B cell (primary cell): ENCODE measurements at regions of chr18 and their contacts with region 1.

Region 1: GRCh38 chr18:3177902-3178687 is 41.7 kb downstream of the MYOM1 start:
- DNase-seq: peak; percentile 95
- ATAC-seq: peak; percentile 84
- H3K4me3 ChIP-seq: peak overlapping the region in 3 of 5 experiments; percentile 37 to 59 (median 44)
- H3K4me3 Mint-ChIP-seq: peak overlapping the region; percentile 77
- H3K27ac ChIP-seq: peak overlapping the region; percentile 53 to 78
- H3K27ac Mint-ChIP-seq: peak overlapping the region; percentile 97
- H3K4me1 ChIP-seq: peaks cover 20 to 27% of the 10 kb centered on the region in 2 donors
- H3K4me1 Mint-ChIP-seq: peaks cover 28% of the 10 kb centered on the region
- H3K27me3 ChIP-seq: no peaks in the 10 kb centered on the region
- H3K27me3 Mint-ChIP-seq: no peaks in the 10 kb centered on the region
- CTCF ChIP-seq: no peak

Region 2: GRCh38 chr18:2636126-2636631 is 541.9 kb before region 1 on chr18:
- CTCF ChIA-PET with region 1: no interaction called
- POLR2A ChIA-PET with region 1: interaction called, 4 read pairs
- intact Hi-C with region 1: loop called (anchors 2 kb)
- DNase-seq: no peak
- ATAC-seq: peak; percentile 11
- H3K4me3 ChIP-seq: peak overlapping the region; percentile 21 to 71 (median 29)
- H3K4me3 Mint-ChIP-seq: peak overlapping the region; percentile 85
- H3K27ac ChIP-seq: peak overlapping the region; percentile 96 to 99
- H3K27ac Mint-ChIP-seq: peak overlapping the region; percentile 99
- H3K4me1 ChIP-seq: peaks cover 67 to 79% of the 10 kb centered on the region in 2 donors
- H3K4me1 Mint-ChIP-seq: peaks cover 84% of the 10 kb centered on the region
- H3K27me3 ChIP-seq: no peaks in the 10 kb centered on the region
- H3K27me3 Mint-ChIP-seq: no peaks in the 10 kb centered on the region
- CTCF ChIP-seq: no peak

Region 3: DNA sequence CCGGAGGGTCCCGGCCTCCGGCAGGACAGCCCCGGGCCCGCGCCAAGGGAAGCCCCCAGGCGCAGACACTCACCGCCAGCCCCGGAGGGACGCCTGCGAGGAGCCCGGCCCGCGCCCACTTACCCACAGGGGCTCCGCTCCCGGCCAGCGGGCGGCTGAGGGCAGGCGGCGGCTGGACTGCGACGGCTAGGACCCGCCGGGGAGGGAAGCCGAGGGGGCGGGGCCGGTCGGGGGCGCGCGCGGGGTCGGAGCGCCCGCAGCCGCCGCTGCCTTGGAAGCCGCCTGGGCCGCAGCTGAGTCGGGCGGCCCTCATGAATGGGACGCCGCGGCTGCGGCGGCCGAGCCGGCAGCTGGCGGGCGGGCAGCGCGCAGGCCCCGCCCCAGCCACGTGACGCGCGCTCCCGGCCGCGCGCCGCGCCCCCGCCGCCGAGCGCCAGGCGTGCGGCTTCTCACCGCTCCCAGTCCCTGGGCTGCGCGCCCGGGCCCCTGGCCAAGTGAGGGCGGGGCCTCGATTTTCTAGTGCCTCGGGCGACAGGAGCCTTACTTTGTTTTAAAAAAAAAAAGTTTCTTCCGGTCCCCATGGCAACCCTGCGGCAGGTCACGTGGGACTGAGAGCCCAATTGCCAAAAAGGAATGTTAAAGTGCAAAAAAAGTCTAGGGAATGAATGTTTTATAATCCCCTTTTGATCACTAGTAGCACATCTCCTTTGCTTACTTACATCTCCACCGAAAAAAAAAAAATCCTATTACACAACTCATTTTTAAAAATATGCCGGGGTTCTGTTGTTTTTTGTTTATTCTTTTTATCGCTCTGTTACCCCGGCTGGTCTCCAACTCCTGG is 164.9 kb before region 1 on chr18 and contains the start of gene LPIN2:
- CTCF ChIA-PET with region 1: no interaction called
- POLR2A ChIA-PET with region 1: no interaction called
- intact Hi-C with region 1: loop called (anchors 1 kb)
- DNase-seq: peak; percentile 96
- ATAC-seq: peak; percentile 83
- H3K4me3 ChIP-seq: peak within 1 kb of the TSS; percentile 43 to 75 (median 73)
- H3K4me3 Mint-ChIP-seq: peak within 1 kb of the TSS; percentile 93
- H3K27ac ChIP-seq: peak within 1 kb of the TSS; percentile 74 to 82
- H3K27ac Mint-ChIP-seq: peak within 1 kb of the TSS; percentile 89
- H3K4me1 ChIP-seq: peaks cover 51 to 54% of the 10 kb centered on the region in 2 donors
- H3K4me1 Mint-ChIP-seq: peaks cover 55% of the 10 kb centered on the region
- H3K27me3 ChIP-seq: no peaks in the 10 kb centered on the region
- H3K27me3 Mint-ChIP-seq: no peaks in the 10 kb centered on the region
- CTCF ChIP-seq: no peak
- total RNA-seq, gene LPIN2: 31.0 and 32.9 TPM in 2 replicates

Region 4: DNA sequence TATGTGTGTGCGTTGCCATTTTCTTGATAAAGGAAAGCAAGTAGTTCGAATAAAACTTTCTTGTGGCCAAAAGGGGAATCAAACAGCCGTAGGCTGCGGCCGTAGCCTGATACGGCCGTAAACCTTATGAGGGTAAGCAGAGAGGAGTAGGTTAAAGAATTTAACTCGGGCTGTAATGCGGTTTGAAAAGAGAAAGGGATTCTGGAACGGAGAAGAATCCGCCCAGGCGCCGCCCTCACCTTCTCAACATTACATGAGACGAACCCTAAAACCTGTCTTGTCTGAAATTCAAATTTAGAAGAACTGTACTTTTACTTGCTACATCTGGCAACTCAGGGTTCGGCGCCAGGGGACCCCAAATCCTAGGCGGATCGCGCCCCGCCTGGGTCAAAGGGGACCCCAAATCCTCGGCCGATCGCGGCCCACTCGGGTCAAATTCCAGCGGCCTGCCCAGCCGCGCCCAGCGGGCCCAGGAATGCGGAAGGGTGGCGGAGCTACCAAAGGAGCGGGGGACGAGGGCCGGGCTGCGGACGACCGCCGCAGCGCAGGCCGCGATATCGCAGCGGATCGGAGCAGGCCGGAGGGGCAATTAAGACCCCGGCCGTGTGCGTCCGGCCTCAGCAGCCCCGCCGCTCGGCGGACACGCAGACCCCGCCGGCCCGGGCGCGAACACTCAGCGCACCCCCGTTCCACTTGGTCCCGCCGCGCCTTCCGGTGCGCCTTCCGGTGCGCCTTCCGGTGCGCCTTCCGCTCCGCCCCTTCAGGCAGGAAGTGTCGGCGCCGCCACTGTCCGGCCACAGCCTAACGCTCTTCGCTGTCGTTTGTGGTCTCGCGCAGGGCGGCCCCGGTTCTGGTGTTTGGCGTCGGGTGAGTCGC is 83.5 kb after region 1 on chr18 and contains the start of gene MYL12B:
- CTCF ChIA-PET with region 1: interaction called, 3 read pairs
- POLR2A ChIA-PET with region 1: interaction called, 5 read pairs
- intact Hi-C with region 1: loop called (anchors 5 kb)
- DNase-seq: peak; percentile 93
- ATAC-seq: peak; percentile 80
- H3K4me3 ChIP-seq: peak within 1 kb of the TSS; percentile 75 to 96 (median 86)
- H3K4me3 Mint-ChIP-seq: peak within 1 kb of the TSS; percentile 88
- H3K27ac ChIP-seq: peak within 1 kb of the TSS; percentile 86 to 97
- H3K27ac Mint-ChIP-seq: peak within 1 kb of the TSS; percentile 100
- H3K4me1 ChIP-seq: peaks cover 70 to 73% of the 10 kb centered on the region in 2 donors
- H3K4me1 Mint-ChIP-seq: peaks cover 77% of the 10 kb centered on the region
- H3K27me3 ChIP-seq: no peaks in the 10 kb centered on the region
- H3K27me3 Mint-ChIP-seq: no peaks in the 10 kb centered on the region
- CTCF ChIP-seq: no peak
- total RNA-seq, gene MYL12B: 124 and 127 TPM in 2 replicates

Region 5: DNA sequence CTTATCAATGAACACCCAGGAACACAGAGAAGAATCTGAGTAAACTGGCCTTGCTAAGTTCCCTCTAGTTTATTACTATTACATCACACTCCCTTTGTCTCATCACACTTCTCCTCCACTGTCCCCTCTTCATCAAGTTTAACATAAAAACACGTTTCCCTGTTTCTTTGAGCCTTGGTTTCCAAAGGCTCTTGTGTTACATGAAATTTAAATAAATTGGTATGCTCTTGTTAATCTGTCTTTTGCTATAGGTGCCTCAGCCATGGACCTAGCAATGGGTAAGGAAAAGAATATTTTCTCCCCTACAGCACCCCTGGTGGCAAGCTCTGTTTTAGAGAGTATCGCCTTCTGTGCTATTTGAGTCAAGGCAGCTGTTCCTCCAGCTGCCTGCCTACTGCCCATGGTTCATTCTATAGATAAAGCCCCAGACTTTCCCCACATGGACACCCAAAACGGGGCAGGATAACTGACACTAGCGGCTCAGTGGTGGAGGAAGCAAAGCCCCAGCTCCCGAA is 303.7 kb after region 1 on chr18:
- CTCF ChIA-PET with region 1: no interaction called
- POLR2A ChIA-PET with region 1: no interaction called
- intact Hi-C with region 1: no loop called
- DNase-seq: peak; percentile 36
- ATAC-seq: peak; percentile 62
- H3K4me3 ChIP-seq: no peak overlapping the region
- H3K4me3 Mint-ChIP-seq: no peak overlapping the region
- H3K27ac ChIP-seq: no peak overlapping the region
- H3K27ac Mint-ChIP-seq: peak overlapping the region; percentile 17
- H3K4me1 ChIP-seq: no peaks in the 10 kb centered on the region
- H3K4me1 Mint-ChIP-seq: no peaks in the 10 kb centered on the region
- H3K27me3 ChIP-seq: no peaks in the 10 kb centered on the region
- H3K27me3 Mint-ChIP-seq: no peaks in the 10 kb centered on the region
- CTCF ChIP-seq: peak; percentile 44

Region 6: GRCh38 chr18:3585656-3586509 is 407.8 kb after region 1 on chr18:
- CTCF ChIA-PET with region 1: no interaction called
- POLR2A ChIA-PET with region 1: interaction called, 4 read pairs
- intact Hi-C with region 1: loop called (anchors 1 kb)
- DNase-seq: peak; percentile 80
- ATAC-seq: peak; percentile 49
- H3K4me3 ChIP-seq: peak overlapping the region in 4 of 5 experiments; percentile 9 to 22 (median 18)
- H3K4me3 Mint-ChIP-seq: peak overlapping the region; percentile 69
- H3K27ac ChIP-seq: peak overlapping the region; percentile 81 to 87
- H3K27ac Mint-ChIP-seq: peak overlapping the region; percentile 83
- H3K4me1 ChIP-seq: peaks cover 42 to 43% of the 10 kb centered on the region in 2 donors
- H3K4me1 Mint-ChIP-seq: peaks cover 47% of the 10 kb centered on the region
- H3K27me3 ChIP-seq: no peaks in the 10 kb centered on the region
- H3K27me3 Mint-ChIP-seq: no peaks in the 10 kb centered on the region
- CTCF ChIP-seq: peak; percentile 57

Region 7: DNA sequence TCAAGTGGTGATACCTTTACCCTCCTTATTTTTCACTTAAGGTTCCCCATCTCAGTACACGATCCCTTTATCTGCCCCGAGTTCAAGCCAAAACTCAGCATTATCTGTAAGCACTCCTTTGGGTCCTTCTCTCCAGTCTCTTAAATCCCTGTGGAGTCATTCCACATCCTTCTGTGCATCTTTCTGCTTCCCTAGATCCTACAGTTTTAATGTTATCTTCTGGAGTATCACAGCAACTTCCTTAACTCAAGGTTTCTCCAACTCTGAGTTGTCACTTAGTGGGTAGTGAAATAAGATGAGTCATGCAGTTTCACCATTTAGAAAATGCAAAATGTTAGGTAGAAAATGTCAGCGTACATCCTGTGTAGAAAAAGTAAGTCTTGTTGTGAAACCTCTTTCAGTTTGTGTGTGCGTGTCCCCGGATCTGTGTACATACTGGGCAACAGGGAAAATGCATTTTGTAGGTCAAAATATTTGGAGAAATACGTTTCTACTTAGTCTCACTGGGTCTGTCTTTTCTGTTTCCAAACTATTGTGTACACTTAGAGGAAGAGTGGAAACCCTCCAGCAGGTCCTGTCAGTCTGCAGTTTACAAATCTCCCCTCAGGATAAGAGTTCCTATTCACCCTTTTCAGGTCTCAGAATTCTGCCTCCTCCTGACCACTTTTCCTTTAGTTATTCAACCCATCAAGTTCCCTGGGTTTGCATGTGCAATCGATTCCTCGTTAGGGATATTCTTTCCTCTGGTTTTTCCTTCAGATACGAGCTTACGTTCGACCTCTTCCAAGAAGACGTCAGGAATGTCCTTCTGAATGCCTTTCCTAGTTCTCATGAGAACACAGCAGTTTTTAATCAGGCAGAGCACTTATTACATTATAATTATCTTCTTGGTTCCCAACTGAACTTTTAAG is 426.7 kb after region 1 on chr18:
- CTCF ChIA-PET with region 1: no interaction called
- POLR2A ChIA-PET with region 1: no interaction called
- intact Hi-C with region 1: loop called (anchors 5 kb)
- DNase-seq: peak; percentile 52
- ATAC-seq: peak; percentile 68
- H3K4me3 ChIP-seq: peak overlapping the region; percentile 4 to 81 (median 53)
- H3K4me3 Mint-ChIP-seq: no peak overlapping the region
- H3K27ac ChIP-seq: peak overlapping the region; percentile 16 to 21
- H3K27ac Mint-ChIP-seq: no peak overlapping the region
- H3K4me1 ChIP-seq: peaks cover 36 to 38% of the 10 kb centered on the region in 2 donors
- H3K4me1 Mint-ChIP-seq: peaks cover 5% of the 10 kb centered on the region
- H3K27me3 ChIP-seq: no peaks in the 10 kb centered on the region
- H3K27me3 Mint-ChIP-seq: no peaks in the 10 kb centered on the region
- CTCF ChIP-seq: no peak